Sigmoid colon (tissue), 7 donors: ENCODE measurements at regions of chr7 and their contacts with region 1.

Region 1: GRCh38 chr7:106285051-106285854 is 470 bp upstream of the NAMPT start:
- DNase-seq: peak; percentile 99
- H3K4me3 ChIP-seq: peak overlapping the region; percentile 82 to 87 (median 86)
- H3K27ac ChIP-seq: peak overlapping the region; percentile 98 to 99 (median 98)
- H3K4me1 ChIP-seq: peaks cover 0 to 31% (median 15%) of the 10 kb centered on the region in 4 donors
- H3K27me3 ChIP-seq: no peaks in the 10 kb centered on the region
- CTCF ChIP-seq: no peak
- EP300 ChIP-seq: peak; percentile 74 to 98 (median 82)
- POLR2A ChIP-seq: peak in 1 of 2 donors; percentile 56

Region 2: GRCh38 chr7:106064771-106065585 is 220.3 kb before region 1 on chr7:
- intact Hi-C with region 1: loop called (anchors 10 kb)
- DNase-seq: peak; percentile 97
- H3K4me3 ChIP-seq: peak overlapping the region in 3 of 4 donors; percentile 22 to 33 (median 30)
- H3K27ac ChIP-seq: peak overlapping the region; percentile 88 to 90 (median 88)
- H3K4me1 ChIP-seq: peaks cover 0 to 93% (median 71%) of the 10 kb centered on the region in 4 donors
- H3K27me3 ChIP-seq: no peaks in the 10 kb centered on the region
- CTCF ChIP-seq: no peak
- EP300 ChIP-seq: peak in 1 of 4 donors; percentile 37
- POLR2A ChIP-seq: no peak

Region 3: GRCh38 chr7:106075937-106076336 is 209.3 kb before region 1 on chr7:
- intact Hi-C with region 1: no loop called
- DNase-seq: no peak
- H3K4me3 ChIP-seq: no peak overlapping the region
- H3K27ac ChIP-seq: peak overlapping the region in 1 of 4 donors; percentile 7
- H3K4me1 ChIP-seq: peaks cover 0 to 51% (median 38%) of the 10 kb centered on the region in 4 donors
- H3K27me3 ChIP-seq: no peaks in the 10 kb centered on the region
- CTCF ChIP-seq: no peak
- EP300 ChIP-seq: no peak
- POLR2A ChIP-seq: no peak

Region 4: DNA sequence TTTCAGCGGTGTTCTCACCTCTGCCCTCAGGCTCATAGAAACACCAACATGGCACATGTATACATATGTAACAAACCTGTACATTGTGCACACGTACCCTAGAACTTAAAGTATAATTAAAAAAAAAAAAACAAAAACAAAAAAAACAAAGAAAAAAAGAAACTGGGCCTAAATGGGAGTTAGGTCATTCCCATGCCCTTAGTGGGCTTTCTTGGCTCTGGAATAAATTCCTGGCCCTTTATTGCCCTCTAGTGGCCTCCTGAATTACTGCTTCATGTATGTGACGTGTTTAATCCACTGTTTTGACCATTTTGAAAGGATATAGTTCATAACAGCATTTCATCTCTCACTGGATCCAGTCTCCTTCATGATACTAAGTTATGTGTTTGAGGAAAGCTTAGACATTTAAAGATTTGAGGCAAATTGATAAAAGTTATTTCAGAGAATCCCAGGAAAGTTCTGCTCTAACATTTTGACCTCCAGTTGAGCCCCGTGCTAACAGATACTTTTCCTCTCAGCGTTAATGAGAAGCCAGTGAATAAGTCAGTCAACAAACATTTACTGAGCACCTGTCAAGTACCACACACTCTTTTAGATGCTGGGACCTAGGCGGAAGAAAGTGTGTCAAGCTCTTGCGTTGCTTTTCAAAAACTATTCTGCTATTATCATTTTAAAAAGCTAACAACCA is 118.5 kb before region 1 on chr7:
- intact Hi-C with region 1: loop called (anchors 5 kb)
- DNase-seq: no peak
- H3K4me3 ChIP-seq: no peak overlapping the region
- H3K27ac ChIP-seq: peak overlapping the region; percentile 27 to 76 (median 54)
- H3K4me1 ChIP-seq: peaks cover 0 to 21% (median 17%) of the 10 kb centered on the region in 4 donors
- H3K27me3 ChIP-seq: no peaks in the 10 kb centered on the region
- CTCF ChIP-seq: peak; percentile 66 to 86 (median 79)
- EP300 ChIP-seq: no peak
- POLR2A ChIP-seq: no peak

Region 5: DNA sequence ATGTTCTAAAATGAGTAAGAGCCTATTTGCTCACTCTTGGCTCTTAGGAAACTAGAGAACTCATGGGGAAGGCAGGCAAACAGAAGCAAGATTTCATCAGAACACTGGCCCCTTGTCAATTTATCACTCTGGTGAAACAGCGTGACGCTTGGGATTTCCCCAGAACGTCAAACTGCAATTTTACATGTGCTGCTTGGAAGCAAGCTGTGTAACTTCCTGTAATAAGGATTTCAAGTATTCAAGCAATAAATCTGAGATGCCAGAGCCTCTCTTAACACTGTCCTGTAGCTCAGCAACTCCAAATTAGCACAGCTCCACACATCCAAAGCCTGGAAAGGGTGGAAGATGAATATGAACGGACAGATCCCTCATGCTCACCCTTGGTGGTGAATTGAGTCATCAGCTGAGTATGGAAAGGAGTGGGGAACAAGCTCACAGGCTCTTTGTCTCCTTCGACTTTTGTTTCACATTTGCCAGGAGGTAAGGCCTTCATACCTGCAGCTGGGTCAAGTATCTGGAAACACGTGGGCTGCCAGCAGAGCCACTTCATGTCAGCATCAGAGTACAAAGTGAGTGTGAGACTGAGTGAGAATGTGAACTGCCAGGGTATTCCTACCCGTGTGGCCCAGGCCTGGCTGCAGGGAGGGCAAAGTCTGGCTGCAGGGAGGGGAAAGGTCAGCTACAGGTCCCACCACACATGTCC is 139.9 kb after region 1 on chr7:
- intact Hi-C with region 1: loop called (anchors 2 kb)
- DNase-seq: peak; percentile 93
- H3K4me3 ChIP-seq: no peak overlapping the region
- H3K27ac ChIP-seq: peak overlapping the region; percentile 54 to 78 (median 68)
- H3K4me1 ChIP-seq: peaks cover 0 to 51% (median 42%) of the 10 kb centered on the region in 4 donors
- H3K27me3 ChIP-seq: no peaks in the 10 kb centered on the region
- CTCF ChIP-seq: no peak
- EP300 ChIP-seq: peak; percentile 84 to 98 (median 91)
- POLR2A ChIP-seq: no peak

Region 6: DNA sequence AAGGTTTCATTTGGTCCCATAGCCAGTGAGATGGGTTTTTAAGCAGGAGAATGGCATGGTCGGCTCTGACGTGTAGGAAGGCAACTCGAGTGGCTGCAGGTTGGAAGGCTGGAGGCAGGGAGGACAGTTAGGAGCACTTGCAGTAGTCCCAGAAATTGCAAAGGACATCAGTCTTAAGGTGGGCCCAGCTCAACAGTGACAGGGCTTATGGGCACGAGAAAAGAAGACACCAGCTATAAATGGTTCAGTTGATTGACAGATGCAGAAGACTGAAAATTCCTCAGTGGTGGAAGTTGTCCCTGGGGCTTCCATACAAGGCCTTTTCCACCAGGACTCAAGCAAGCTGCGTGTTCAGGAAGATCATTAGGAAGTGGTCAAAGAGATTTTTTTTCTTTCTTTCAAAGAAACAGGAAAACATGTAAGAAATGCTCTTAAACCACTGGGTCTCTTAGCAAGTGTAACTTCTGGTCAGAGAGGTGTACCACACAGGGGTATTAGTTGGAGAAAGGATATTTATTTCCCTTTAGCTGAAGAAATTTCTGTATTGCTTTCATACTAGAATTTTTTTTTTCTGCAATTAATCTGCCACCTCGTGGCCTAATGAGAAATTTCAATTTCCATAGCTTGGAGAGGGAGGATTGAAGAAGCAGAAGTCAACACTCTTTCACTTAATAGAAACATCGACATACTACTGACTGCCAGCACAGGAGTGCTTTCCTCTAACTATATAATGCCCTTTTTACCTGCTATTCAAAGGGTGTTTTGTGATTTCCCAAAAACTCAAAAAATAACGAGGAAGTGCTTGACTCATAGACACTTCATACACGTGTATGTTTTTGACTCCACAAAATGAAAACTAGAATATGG is 177.0 kb after region 1 on chr7:
- intact Hi-C with region 1: loop called (anchors 2 kb)
- DNase-seq: no peak
- H3K4me3 ChIP-seq: no peak overlapping the region
- H3K27ac ChIP-seq: no peak overlapping the region
- H3K4me1 ChIP-seq: peaks cover 0 to 10% (median 3%) of the 10 kb centered on the region in 4 donors
- H3K27me3 ChIP-seq: no peaks in the 10 kb centered on the region
- CTCF ChIP-seq: peak in 3 of 4 experiments; percentile 57 to 72 (median 70)
- EP300 ChIP-seq: no peak
- POLR2A ChIP-seq: no peak